ENCODE measurements at regions of chr19 and their contacts with region 1.

Region 1: GRCh38 chr19:38964738-38965137 is 10.8 kb downstream of the FBXO17 start:
- DNase-seq: no peak
- H3K4me3 ChIP-seq: no peak overlapping the region
- CTCF ChIP-seq: no peak

Region 2: GRCh38 chr19:38912600-38913514 is 51.9 kb before region 1 on chr19:
- CTCF ChIA-PET with region 1: no interaction called
- POLR2A ChIA-PET with region 1: no interaction called
- DNase-seq: no peak
- H3K4me3 ChIP-seq: no peak overlapping the region
- CTCF ChIP-seq: no peak

Region 3: GRCh38 chr19:38952395-38953165 is 12.2 kb before region 1 on chr19:
- CTCF ChIA-PET with region 1: interaction called, 12 read pairs
- POLR2A ChIA-PET with region 1: no interaction called
- DNase-seq: no peak
- H3K4me3 ChIP-seq: no peak overlapping the region
- CTCF ChIP-seq: peak; percentile 11